Thyroid gland (tissue), 4 donors: ENCODE measurements at regions of chr10 and their contacts with region 1.

Region 1: DNA sequence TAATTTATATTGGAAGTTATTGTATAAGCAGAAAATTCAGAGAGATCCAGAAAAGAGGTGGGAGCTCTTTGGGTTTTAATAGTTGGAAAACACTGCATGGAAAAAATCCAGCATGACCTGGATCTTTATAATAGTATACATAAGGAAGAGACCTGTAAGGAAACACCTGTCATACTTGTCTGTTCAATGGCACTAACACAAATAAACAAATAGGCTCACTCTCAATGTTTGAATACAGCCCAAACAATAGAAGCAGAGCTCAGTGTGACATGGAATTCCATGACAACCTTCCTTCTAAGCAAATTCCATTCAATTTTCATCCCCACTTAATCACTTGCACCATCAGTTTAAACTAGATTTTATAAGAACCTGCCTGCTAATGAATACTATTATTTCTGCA is 31.7 kb downstream of the CISD1 start:
- DNase-seq: no peak
- H3K4me3 ChIP-seq: no peak overlapping the region
- H3K27ac ChIP-seq: no peak overlapping the region
- H3K4me1 ChIP-seq: no peaks in the 10 kb centered on the region
- H3K27me3 ChIP-seq: no peaks in the 10 kb centered on the region
- CTCF ChIP-seq: no peak
- POLR2A ChIP-seq: no peak

Region 2: DNA sequence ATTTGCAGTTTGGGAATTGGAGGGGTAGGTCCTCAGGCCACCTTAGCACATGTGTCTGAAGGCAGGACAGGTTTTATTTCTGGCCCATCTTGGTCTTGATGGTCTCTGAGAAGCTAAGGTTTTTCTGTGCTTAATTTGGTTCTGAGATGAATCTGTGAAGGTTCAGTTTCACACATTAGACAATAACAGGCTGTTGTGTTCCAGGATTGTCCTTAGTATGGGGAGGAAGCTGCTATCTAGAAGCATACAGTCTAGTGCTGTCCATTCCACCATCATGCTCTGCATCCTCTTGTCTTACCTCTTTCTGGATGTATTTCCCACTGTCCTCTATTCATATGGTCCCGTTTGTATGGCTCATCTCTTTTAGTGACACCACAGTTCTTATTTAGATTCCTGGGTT is 41.3 kb after region 1 on chr10:
- intact Hi-C with region 1: no loop called
- DNase-seq: no peak
- H3K4me3 ChIP-seq: no peak overlapping the region
- H3K27ac ChIP-seq: no peak overlapping the region
- H3K4me1 ChIP-seq: no peaks in the 10 kb centered on the region
- H3K27me3 ChIP-seq: no peaks in the 10 kb centered on the region
- CTCF ChIP-seq: no peak
- POLR2A ChIP-seq: no peak

Region 3: GRCh38 chr10:58372607-58373441 is 72.1 kb after region 1 on chr10:
- intact Hi-C with region 1: loop called (anchors 10 kb)
- DNase-seq: no peak
- H3K4me3 ChIP-seq: no peak overlapping the region
- H3K27ac ChIP-seq: no peak overlapping the region
- H3K4me1 ChIP-seq: no peaks in the 10 kb centered on the region
- H3K27me3 ChIP-seq: no peaks in the 10 kb centered on the region
- CTCF ChIP-seq: no peak
- POLR2A ChIP-seq: no peak